Adrenal gland (tissue), 19 donors: ENCODE measurements at regions of chr15 and their contacts with region 1.

Region 1: DNA sequence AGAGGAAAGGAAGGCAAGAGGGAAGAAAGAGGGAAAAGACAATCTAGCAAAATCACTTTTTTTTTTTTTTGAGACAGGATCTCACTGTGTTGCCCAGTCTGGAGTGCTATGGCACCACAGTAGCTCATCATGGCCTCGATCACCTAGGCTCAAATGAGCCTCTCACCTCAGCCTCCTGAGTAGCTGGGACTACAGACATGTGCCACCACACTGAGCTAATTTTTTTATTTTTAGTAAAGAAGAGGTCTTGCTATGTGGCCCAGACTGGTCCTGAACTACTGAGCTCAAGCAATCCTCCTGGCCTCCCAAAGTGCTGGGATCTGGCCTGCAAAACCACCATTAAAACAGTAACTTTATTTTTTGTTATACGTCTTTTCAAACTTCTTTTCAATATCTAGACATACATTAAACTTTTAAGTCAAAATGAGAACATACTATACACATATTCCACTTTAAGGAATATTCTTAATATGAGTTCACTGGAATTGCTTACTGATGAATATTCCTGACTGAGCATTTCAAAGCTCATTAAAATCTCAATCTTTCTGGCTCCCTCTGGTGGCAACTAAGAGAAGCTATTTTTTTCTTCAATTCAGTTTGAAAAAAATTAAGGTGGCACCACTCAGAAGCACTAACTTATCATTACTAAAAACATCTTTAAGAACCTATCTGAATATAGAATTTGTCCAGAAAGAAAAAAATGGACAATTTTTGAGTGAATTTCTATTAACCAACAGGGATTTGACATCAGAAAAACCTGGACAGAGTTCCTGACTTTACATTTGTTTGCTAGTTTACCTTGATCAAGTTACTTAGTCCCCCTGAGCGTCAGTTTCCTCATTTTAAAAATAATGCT is 40.9 kb downstream of the UACA start:
- DNase-seq: no peak
- H3K4me3 ChIP-seq: no peak overlapping the region
- H3K27ac ChIP-seq: no peak overlapping the region
- H3K4me1 ChIP-seq: peaks cover 2 to 6% of the 10 kb centered on the region in 2 donors
- H3K27me3 ChIP-seq: no peaks in the 10 kb centered on the region
- CTCF ChIP-seq: peak; percentile 65 to 86 (median 67)
- POLR2A ChIP-seq: no peak

Region 2: DNA sequence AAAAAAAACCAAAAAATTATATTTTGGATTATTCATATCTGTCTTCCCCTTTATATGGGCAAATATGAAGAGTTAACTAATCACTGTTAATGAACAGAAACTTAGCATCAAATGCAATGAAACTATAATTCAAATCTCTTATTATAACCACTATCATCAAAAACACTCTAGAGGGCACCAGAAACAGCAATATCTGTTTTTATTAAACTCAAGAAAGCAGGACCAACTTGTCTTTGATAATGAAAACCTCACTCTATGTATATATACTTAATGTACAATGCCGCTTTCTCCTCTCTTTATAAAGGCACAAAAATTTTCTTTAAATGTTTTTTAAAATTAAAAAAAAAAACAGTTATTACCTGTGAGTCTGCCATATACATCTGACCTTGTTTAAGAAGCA is 51.8 kb before region 1 on chr15:
- intact Hi-C with region 1: loop called in 1 of 2 experiments (anchors 10 kb)
- DNase-seq: no peak
- H3K4me3 ChIP-seq: no peak overlapping the region
- H3K27ac ChIP-seq: no peak overlapping the region
- H3K4me1 ChIP-seq: no peaks in the 10 kb centered on the region
- H3K27me3 ChIP-seq: no peaks in the 10 kb centered on the region
- CTCF ChIP-seq: peak in 3 of 6 experiments; percentile 17 to 35 (median 24)
- POLR2A ChIP-seq: no peak